Activated CD4-positive, alpha-beta T cell treated with anti-CD3 and anti-CD28 coated beads, Interleukin-2, amount 10 ng/mL, durations not matched to agents 7 days and 5 days (primary cell): ENCODE measurements at regions of chr2 and their contacts with region 1.

Region 1: GRCh38 chr2:85595301-85596025 is at the start of gene RNF181:
- DNase-seq: peak; percentile 96
- H3K4me3 Mint-ChIP-seq: peak within 1 kb of the TSS; percentile 98
- H3K27ac Mint-ChIP-seq: peak within 1 kb of the TSS; percentile 91
- H3K4me1 Mint-ChIP-seq: peaks cover 32% of the 10 kb centered on the region
- H3K27me3 Mint-ChIP-seq: no peaks in the 10 kb centered on the region
- total RNA-seq, gene RNF181: 89.7 to 106 TPM

Region 2: GRCh38 chr2:85446296-85447221 is 148.9 kb before region 1 on chr2:
- CTCF ChIA-PET with region 1: no interaction called
- POLR2A ChIA-PET with region 1: no interaction called
- DNase-seq: no peak
- H3K4me3 Mint-ChIP-seq: no peak overlapping the region
- H3K27ac Mint-ChIP-seq: no peak overlapping the region
- H3K4me1 Mint-ChIP-seq: peaks cover 8% of the 10 kb centered on the region
- H3K27me3 Mint-ChIP-seq: no peaks in the 10 kb centered on the region

Region 3: DNA sequence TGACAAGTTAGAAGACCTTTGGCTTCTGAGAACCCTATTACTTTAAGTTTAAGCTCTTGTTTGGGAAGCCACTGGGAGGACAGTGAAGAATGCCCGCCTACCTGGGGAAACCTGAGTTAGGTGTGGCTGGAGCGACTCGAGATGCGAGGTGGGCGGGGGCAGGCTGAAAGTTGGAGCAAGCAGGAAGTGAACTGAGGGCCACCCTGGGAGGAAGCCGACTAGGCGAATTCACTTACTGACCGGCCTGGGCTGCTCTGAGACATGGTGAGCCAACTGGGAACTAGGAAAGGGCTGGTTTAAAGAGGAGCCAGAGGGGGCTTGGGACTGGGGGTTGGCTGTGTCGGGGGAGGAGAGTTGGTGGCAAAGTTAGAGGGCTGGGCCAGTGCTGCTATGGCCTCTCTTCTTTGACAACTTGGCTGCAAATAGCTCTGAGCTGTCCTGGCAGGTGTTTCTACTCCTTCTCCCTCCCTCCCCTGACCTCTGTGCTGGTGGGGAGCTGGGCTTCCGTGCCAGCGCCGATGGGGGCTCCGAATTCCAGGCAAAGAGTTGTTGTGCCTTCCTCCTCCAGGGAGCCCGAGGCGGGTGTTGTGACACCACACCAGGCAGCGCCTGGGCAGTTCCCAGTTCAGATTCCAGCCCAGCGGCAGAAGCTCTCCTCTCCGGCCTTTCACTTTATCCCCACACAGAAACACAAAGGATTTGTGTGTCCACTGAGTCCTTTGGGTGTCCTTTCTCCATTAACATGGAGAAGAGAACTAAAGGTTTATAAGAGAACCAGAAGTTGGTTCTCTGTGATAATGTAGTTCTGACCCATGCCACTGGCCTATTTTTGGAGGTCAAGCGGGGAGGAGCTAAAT is 17.8 kb before region 1 on chr2 and contains the start of gene VAMP8:
- CTCF ChIA-PET with region 1: interaction called, 10 read pairs
- POLR2A ChIA-PET with region 1: no interaction called
- DNase-seq: peak; percentile 73
- H3K4me3 Mint-ChIP-seq: peak within 1 kb of the TSS; percentile 93
- H3K27ac Mint-ChIP-seq: peak within 1 kb of the TSS; percentile 92
- H3K4me1 Mint-ChIP-seq: peaks cover 39% of the 10 kb centered on the region
- H3K27me3 Mint-ChIP-seq: peaks cover 2% of the 10 kb centered on the region
- total RNA-seq, gene VAMP8: 131 to 149 TPM

Region 4: GRCh38 chr2:85605406-85606115 is 10.1 kb after region 1 on chr2:
- CTCF ChIA-PET with region 1: interaction called, 21 read pairs
- POLR2A ChIA-PET with region 1: no interaction called
- DNase-seq: no peak
- H3K4me3 Mint-ChIP-seq: no peak overlapping the region
- H3K27ac Mint-ChIP-seq: no peak overlapping the region
- H3K4me1 Mint-ChIP-seq: peaks cover 24% of the 10 kb centered on the region
- H3K27me3 Mint-ChIP-seq: peaks cover 2% of the 10 kb centered on the region

Region 5: GRCh38 chr2:85662899-85663593 is 67.6 kb after region 1 on chr2:
- CTCF ChIA-PET with region 1: no interaction called
- POLR2A ChIA-PET with region 1: no interaction called
- DNase-seq: no peak
- H3K4me3 Mint-ChIP-seq: no peak overlapping the region
- H3K27ac Mint-ChIP-seq: no peak overlapping the region
- H3K4me1 Mint-ChIP-seq: no peaks in the 10 kb centered on the region
- H3K27me3 Mint-ChIP-seq: no peaks in the 10 kb centered on the region